Ovary (tissue), 10 donors: ENCODE measurements at regions of chrX and their contacts with region 1.

Region 1: GRCh38 chrX:85666471-85666870 is 287.0 kb upstream of the POF1B start:
- DNase-seq: no peak
- H3K4me3 ChIP-seq: no peak overlapping the region
- H3K27ac ChIP-seq: no peak overlapping the region
- H3K4me1 ChIP-seq: no peaks in the 10 kb centered on the region
- H3K27me3 ChIP-seq: no peaks in the 10 kb centered on the region
- CTCF ChIP-seq: no peak
- EP300 ChIP-seq: no peak
- POLR2A ChIP-seq: no peak

Region 2: GRCh38 chrX:84078991-84079390 is 1587.5 kb before region 1 on chrX:
- intact Hi-C with region 1: loop called in 1 of 4 experiments (anchors 10 kb)
- DNase-seq: no peak
- H3K4me3 ChIP-seq: no peak overlapping the region
- H3K27ac ChIP-seq: no peak overlapping the region
- H3K4me1 ChIP-seq: no peaks in the 10 kb centered on the region
- H3K27me3 ChIP-seq: no peaks in the 10 kb centered on the region
- CTCF ChIP-seq: no peak
- EP300 ChIP-seq: no peak
- POLR2A ChIP-seq: no peak